ENCODE measurements at regions of chr5 and their contacts with region 1.

Region 1: DNA sequence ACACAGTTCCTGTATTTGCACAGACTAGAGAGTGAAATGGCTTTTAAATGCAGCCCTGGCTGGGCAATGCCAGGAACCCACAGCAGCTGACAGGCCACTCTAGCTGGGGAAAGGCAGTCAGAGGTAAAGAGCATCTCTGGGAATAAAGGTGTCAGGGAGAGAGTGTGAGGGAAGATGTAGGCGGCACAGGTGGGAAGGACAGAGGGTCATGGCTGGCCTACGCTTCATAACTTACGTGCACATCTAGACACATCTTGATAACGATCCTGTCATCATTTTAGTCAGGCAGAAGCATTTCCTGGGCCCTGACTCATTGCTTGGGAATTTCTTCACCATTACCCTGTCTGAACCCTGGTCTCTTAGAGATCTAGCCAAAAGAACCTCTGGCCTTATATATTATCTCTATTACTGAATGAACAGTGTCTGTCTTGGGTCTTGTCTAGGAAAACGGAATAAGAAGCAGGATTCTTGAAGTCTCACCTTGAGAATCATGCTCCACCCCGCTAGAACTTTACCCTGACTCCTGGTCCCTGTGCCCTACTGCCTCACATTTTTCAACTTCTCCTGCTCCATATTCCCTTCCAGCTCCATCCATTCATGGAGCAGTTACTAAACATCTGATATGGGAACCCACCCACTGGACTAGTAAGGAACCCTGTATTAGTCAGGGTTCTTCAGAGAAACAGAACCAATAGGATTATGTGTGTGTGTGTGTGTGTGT is 106.4 kb upstream of the ELL2 start:
- DNase-seq: peak; percentile 72
- H3K4me3 ChIP-seq: no peak overlapping the region
- H3K27ac ChIP-seq: peak overlapping the region; percentile 90
- H3K4me1 ChIP-seq: peaks cover 38% of the 10 kb centered on the region
- H3K27me3 ChIP-seq: no peaks in the 10 kb centered on the region
- CTCF ChIP-seq: no peak
- POLR2A ChIP-seq: peak; percentile 88

Region 2: DNA sequence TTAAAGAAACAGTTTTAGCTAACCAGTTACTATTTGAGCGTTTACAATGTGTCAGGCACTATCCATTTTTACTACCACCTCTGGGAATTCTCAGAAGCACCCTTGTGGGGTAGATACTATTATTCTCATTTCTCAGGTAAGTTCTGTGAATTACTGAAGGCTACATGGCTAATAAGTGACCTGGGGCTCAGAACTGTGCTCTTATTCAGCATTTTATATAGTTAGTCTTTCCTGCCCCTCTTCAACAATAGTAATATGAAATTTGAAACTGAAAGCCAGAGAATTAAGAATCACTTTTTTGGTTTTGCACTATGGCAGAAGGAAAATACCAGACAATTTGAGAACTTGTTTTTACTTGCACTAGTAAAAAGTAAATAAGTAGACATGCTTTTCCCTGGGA is 118.2 kb before region 1 on chr5:
- CTCF ChIA-PET with region 1: no interaction called
- POLR2A ChIA-PET with region 1: no interaction called
- dilution Hi-C with region 1: no loop called
- intact Hi-C with region 1: no loop called
- DNase-seq: no peak
- H3K4me3 ChIP-seq: no peak overlapping the region
- H3K27ac ChIP-seq: no peak overlapping the region
- H3K4me1 ChIP-seq: peaks cover 8% of the 10 kb centered on the region
- H3K27me3 ChIP-seq: no peaks in the 10 kb centered on the region
- CTCF ChIP-seq: no peak
- POLR2A ChIP-seq: no peak

Region 3: GRCh38 chr5:96049398-96050272 is 18.4 kb before region 1 on chr5:
- CTCF ChIA-PET with region 1: interaction called, 11 read pairs
- POLR2A ChIA-PET with region 1: no interaction called
- dilution Hi-C with region 1: no loop called
- intact Hi-C with region 1: no loop called
- DNase-seq: peak; percentile 83
- H3K4me3 ChIP-seq: no peak overlapping the region
- H3K27ac ChIP-seq: no peak overlapping the region
- H3K4me1 ChIP-seq: peaks cover 10% of the 10 kb centered on the region
- H3K27me3 ChIP-seq: no peaks in the 10 kb centered on the region
- CTCF ChIP-seq: no peak
- POLR2A ChIP-seq: no peak

Region 4: DNA sequence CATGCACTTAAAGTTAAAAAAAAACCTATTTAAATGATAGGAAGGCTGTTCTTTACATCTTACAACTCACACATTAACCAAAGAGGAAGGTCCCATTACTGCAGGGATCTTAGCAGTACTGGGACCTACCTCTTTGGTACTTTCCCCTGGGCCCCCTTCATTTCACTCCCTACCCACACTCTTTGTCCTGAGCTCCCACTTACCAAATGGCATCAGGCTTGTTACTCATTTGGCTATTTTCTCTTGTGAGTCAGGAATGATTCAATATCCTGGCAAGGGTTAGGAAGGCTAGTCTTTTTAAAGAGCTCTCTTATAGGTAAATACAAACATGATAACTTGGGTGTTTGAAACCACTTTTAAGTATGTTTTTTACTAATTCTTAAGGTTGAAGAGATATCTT is 11.0 kb after region 1 on chr5:
- CTCF ChIA-PET with region 1: interaction called, 14 read pairs
- POLR2A ChIA-PET with region 1: no interaction called
- dilution Hi-C with region 1: no loop called
- intact Hi-C with region 1: loop called (anchors 1 kb)
- DNase-seq: peak; percentile 91
- H3K4me3 ChIP-seq: no peak overlapping the region
- H3K27ac ChIP-seq: peak overlapping the region; percentile 72
- H3K4me1 ChIP-seq: peaks cover 47% of the 10 kb centered on the region
- H3K27me3 ChIP-seq: no peaks in the 10 kb centered on the region
- CTCF ChIP-seq: no peak
- POLR2A ChIP-seq: no peak